HepG2 (cell line): ENCODE measurements at regions of chr3 and their contacts with region 1.

Region 1: DNA sequence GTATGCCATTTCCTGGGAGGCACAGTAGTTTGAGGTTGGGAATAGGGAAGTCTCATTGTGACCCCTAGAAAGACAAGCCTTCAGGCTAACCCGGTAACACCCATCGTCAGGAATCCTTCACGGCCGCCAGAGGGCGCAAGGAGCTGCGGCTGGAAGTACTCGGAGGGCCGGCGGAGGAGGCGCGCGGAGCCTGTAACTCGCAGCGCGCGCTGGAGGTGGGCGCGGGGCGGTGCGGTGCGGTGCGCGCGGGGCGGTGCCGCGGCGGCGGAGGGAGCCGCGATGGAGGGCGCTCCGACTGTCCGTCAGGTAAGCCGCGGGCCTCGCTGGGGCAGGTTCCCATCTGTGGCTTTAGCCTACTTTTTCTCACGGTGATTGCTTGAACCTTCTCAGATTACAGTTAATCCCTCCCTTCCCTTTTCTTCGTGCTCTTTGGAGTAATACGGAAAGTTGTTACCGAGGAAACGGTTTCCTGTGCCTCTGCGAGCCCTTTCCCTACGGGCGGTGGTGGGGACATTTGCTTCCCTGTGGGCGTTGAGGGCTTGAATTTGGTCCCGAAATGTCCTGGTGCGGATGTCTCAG is at the start of gene GRAMD1C:
- DNase-seq: peak; percentile 72
- ATAC-seq: peak; percentile 98
- H3K4me3 ChIP-seq: peak within 1 kb of the TSS; percentile 44 to 77 (median 57)
- H3K27ac ChIP-seq: no peak within 1 kb of the TSS
- H3K4me1 ChIP-seq: peaks cover 26% of the 10 kb centered on the region
- H3K27me3 ChIP-seq: peaks cover 0 to 6% of the 10 kb centered on the region in 2 experiments; a peak in 4 of 5 replicates
- CTCF ChIP-seq: peak; percentile 90
- EP300 ChIP-seq: no peak
- POLR2A ChIP-seq: no peak
- RAD21 ChIP-seq: peak; percentile 83
- total RNA-seq, gene GRAMD1C: not detected in 2 replicates

Region 2: GRCh38 chr3:113523241-113523640 is 315.5 kb before region 1 on chr3:
- CTCF ChIA-PET with region 1: no interaction called
- POLR2A ChIA-PET with region 1: no interaction called
- in situ Hi-C with region 1: no loop called
- intact Hi-C with region 1: no loop called
- DNase-seq: no peak
- ATAC-seq: no peak
- H3K4me3 ChIP-seq: no peak overlapping the region
- H3K27ac ChIP-seq: no peak overlapping the region
- H3K4me1 ChIP-seq: no peaks in the 10 kb centered on the region
- H3K27me3 ChIP-seq: no peaks in the 10 kb centered on the region
- CTCF ChIP-seq: no peak
- EP300 ChIP-seq: no peak
- POLR2A ChIP-seq: no peak
- RAD21 ChIP-seq: no peak

Region 3: DNA sequence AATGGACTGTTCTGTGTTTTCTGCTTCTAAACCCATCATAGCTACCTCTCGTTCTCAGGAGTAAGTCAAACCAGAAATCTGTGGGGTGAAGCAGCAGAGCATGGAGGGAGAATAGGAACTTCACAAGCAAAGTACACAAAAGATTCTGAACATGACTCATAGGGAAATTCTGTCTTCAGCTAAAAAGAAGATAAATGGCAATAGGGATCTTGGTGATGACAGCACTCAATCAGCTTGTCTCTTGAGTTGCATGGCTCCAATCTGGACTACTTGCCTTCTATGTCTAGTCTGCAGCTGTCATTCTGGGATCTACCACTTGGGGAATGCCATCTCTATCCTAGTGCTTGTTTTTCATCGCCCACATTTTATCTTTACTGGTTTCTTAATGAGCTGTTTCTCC is 13.6 kb before region 1 on chr3:
- CTCF ChIA-PET with region 1: no interaction called
- POLR2A ChIA-PET with region 1: no interaction called
- in situ Hi-C with region 1: no loop called
- intact Hi-C with region 1: no loop called
- DNase-seq: no peak
- ATAC-seq: peak; percentile 83
- H3K4me3 ChIP-seq: no peak overlapping the region
- H3K27ac ChIP-seq: no peak overlapping the region
- H3K4me1 ChIP-seq: peaks cover 7% of the 10 kb centered on the region
- H3K27me3 ChIP-seq: no peaks in the 10 kb centered on the region
- CTCF ChIP-seq: 0 out of 2 replicates have a peak, but pooled peaks have one; percentile 4
- EP300 ChIP-seq: no peak
- POLR2A ChIP-seq: no peak
- RAD21 ChIP-seq: no peak

Region 4: DNA sequence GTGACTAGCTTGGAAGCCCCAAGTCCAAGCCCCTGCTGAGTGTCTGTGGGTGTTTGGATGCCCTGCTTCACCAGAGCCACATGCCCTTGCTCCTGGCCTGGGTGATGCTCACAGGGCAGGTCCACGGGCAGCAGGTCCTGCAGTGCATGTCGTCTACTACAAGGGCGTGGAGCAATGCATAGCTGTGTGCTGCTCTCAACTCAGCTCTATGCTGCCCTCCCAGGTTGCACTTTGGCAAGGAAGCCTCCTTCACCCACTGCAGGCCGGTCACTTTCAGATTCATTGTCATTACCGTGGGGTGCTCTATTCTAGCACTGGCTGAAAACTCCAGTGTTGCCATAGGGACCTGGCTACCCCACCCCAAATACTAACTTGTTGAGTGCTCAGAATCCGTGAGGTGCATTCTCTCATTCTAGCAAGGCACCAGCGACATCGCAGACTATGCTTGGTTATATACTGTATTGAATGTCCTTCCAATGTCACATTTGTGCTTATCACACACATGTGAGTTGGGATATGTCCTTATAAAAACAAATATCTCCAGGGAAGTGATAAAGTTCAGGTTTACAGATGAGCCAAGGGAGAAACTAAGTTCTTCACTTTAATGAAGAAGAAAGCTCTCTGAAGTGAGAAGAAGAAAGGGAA is 51.7 kb after region 1 on chr3:
- CTCF ChIA-PET with region 1: no interaction called
- POLR2A ChIA-PET with region 1: no interaction called
- in situ Hi-C with region 1: no loop called
- intact Hi-C with region 1: loop called (anchors 1 kb)
- DNase-seq: peak; percentile 20
- ATAC-seq: peak; percentile 99
- H3K4me3 ChIP-seq: no peak overlapping the region
- H3K27ac ChIP-seq: no peak overlapping the region
- H3K4me1 ChIP-seq: peaks cover 9% of the 10 kb centered on the region; the same call in 1 of the 2 replicates
- H3K27me3 ChIP-seq: no peaks in the 10 kb centered on the region
- CTCF ChIP-seq: peak; percentile 64
- EP300 ChIP-seq: no peak
- POLR2A ChIP-seq: no peak
- RAD21 ChIP-seq: 0 out of 2 replicates have a peak, but pooled peaks have one; percentile 8

Region 5: GRCh38 chr3:113912552-113913236 is 74.0 kb after region 1 on chr3:
- CTCF ChIA-PET with region 1: interaction called, 32 read pairs
- POLR2A ChIA-PET with region 1: no interaction called
- in situ Hi-C with region 1: loop called (anchors 5 kb)
- intact Hi-C with region 1: loop called (anchors 1 kb)
- DNase-seq: peak; percentile 69
- ATAC-seq: peak; percentile 96
- H3K4me3 ChIP-seq: no peak overlapping the region
- H3K27ac ChIP-seq: no peak overlapping the region
- H3K4me1 ChIP-seq: no peaks in the 10 kb centered on the region
- H3K27me3 ChIP-seq: 0 out of 5 replicates have a peak, but pooled peaks cover 0 to 8% of the 10 kb centered on the region in 2 experiments
- CTCF ChIP-seq: peak; percentile 85
- EP300 ChIP-seq: no peak
- POLR2A ChIP-seq: no peak
- RAD21 ChIP-seq: peak; percentile 76